ENCODE measurements at regions of chrX and their contacts with region 1.

Region 1: GRCh38 chrX:129637217-129638109 is 17.3 kb downstream of the APLN start:
- DNase-seq: peak; percentile 60 to 72
- ATAC-seq: peak; percentile 71 to 91
- H3K4me3 ChIP-seq: no peak overlapping the region
- H3K27ac ChIP-seq: no peak overlapping the region
- H3K4me1 ChIP-seq: no peaks in the 10 kb centered on the region
- CTCF ChIP-seq: peak; percentile 74
- EP300 ChIP-seq: no peak
- POLR2A ChIP-seq: no peak
- RAD21 ChIP-seq: peak; percentile 76 to 83

Region 2: GRCh38 chrX:129449148-129449547 is 188.3 kb before region 1 on chrX:
- CTCF ChIA-PET with region 1: no interaction called
- POLR2A ChIA-PET with region 1: no interaction called
- DNase-seq: peak in 1 of 2 experiments; percentile 13
- ATAC-seq: peak in 1 of 2 experiments; percentile 46; a peak in 1 of 6 replicates
- H3K4me3 ChIP-seq: no peak overlapping the region
- H3K27ac ChIP-seq: no peak overlapping the region
- H3K4me1 ChIP-seq: no peaks in the 10 kb centered on the region
- CTCF ChIP-seq: no peak
- EP300 ChIP-seq: no peak
- POLR2A ChIP-seq: no peak
- RAD21 ChIP-seq: no peak

Region 3: DNA sequence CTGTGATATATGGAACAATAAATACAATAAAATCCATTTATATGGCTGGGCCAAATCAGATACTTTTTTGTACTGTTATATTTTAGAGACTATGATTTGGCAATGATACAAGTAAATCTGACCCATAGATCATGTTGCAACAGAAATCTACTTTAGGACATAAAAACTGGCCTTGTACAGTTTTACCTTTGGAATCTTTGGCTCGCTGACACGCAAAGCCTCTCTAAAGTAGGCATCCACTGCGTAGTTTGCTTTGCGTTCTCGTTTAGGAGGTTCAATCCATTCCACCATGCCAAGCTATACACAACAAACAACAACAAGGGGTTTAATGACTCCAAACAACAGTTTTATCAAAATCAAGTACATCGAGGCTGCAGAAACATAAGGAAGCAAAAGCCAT is 156.6 kb before region 1 on chrX:
- CTCF ChIA-PET with region 1: no interaction called
- POLR2A ChIA-PET with region 1: no interaction called
- DNase-seq: no peak
- ATAC-seq: no peak
- H3K4me3 ChIP-seq: no peak overlapping the region
- H3K27ac ChIP-seq: no peak overlapping the region
- H3K4me1 ChIP-seq: no peaks in the 10 kb centered on the region
- CTCF ChIP-seq: no peak
- EP300 ChIP-seq: no peak
- POLR2A ChIP-seq: no peak
- RAD21 ChIP-seq: no peak

Region 4: GRCh38 chrX:129606918-129607317 is 30.5 kb before region 1 on chrX:
- CTCF ChIA-PET with region 1: interaction called, 21 read pairs
- POLR2A ChIA-PET with region 1: no interaction called
- DNase-seq: peak; percentile 47 to 62
- ATAC-seq: peak; percentile 59 to 69; a peak in 4 of 6 replicates
- H3K4me3 ChIP-seq: no peak overlapping the region
- H3K27ac ChIP-seq: no peak overlapping the region
- H3K4me1 ChIP-seq: peaks cover 4% of the 10 kb centered on the region; the same call in 1 of the 3 replicates
- CTCF ChIP-seq: peak; percentile 72
- EP300 ChIP-seq: no peak
- POLR2A ChIP-seq: no peak
- RAD21 ChIP-seq: peak; percentile 83 to 87

Region 5: GRCh38 chrX:129649268-129650182 is 12.1 kb after region 1 on chrX:
- CTCF ChIA-PET with region 1: interaction called, 18 read pairs
- POLR2A ChIA-PET with region 1: no interaction called
- DNase-seq: no peak
- ATAC-seq: no peak
- H3K4me3 ChIP-seq: no peak overlapping the region
- H3K27ac ChIP-seq: no peak overlapping the region
- H3K4me1 ChIP-seq: no peaks in the 10 kb centered on the region
- CTCF ChIP-seq: no peak
- EP300 ChIP-seq: no peak
- POLR2A ChIP-seq: no peak
- RAD21 ChIP-seq: no peak

Region 6: DNA sequence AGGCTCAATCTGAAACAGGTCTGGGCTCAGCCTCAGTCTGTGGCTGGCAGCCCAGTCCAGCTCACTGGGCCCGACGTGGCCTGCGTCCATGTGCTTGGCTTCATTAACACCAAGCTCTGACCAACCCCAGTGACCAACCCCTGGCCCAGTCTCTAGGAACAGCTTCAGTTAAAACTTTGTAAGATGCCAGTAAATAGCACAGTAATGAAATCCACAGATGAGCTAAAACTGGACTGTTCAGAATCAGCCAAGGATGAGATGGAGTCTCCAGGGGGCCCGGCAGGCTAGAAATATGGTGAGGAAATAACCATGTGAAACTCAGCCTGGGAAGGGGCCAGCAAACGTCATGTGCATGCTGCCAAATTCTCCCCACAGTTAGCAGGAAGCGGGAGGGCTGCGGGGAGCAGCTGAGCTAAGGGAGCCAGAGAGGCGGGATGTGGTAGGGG is 64.2 kb after region 1 on chrX:
- CTCF ChIA-PET with region 1: interaction called, 11 read pairs
- POLR2A ChIA-PET with region 1: no interaction called
- DNase-seq: no peak
- ATAC-seq: no peak
- H3K4me3 ChIP-seq: no peak overlapping the region
- H3K27ac ChIP-seq: no peak overlapping the region
- H3K4me1 ChIP-seq: peaks cover 18% of the 10 kb centered on the region
- CTCF ChIP-seq: no peak
- EP300 ChIP-seq: no peak
- POLR2A ChIP-seq: no peak
- RAD21 ChIP-seq: no peak

Region 7: GRCh38 chrX:129726307-129727111 is 89.0 kb after region 1 on chrX:
- CTCF ChIA-PET with region 1: interaction called, 218 read pairs
- POLR2A ChIA-PET with region 1: no interaction called
- DNase-seq: peak; percentile 36 to 63
- ATAC-seq: peak; percentile 87 to 97
- H3K4me3 ChIP-seq: no peak overlapping the region
- H3K27ac ChIP-seq: no peak overlapping the region
- H3K4me1 ChIP-seq: no peaks in the 10 kb centered on the region
- CTCF ChIP-seq: peak; percentile 76
- EP300 ChIP-seq: no peak
- POLR2A ChIP-seq: no peak
- RAD21 ChIP-seq: peak; percentile 89 to 94

Region 8: GRCh38 chrX:129746557-129747470 is 109.4 kb after region 1 on chrX:
- CTCF ChIA-PET with region 1: interaction called, 11 read pairs
- POLR2A ChIA-PET with region 1: no interaction called
- DNase-seq: no peak
- ATAC-seq: no peak
- H3K4me3 ChIP-seq: no peak overlapping the region
- H3K27ac ChIP-seq: no peak overlapping the region
- H3K4me1 ChIP-seq: no peaks in the 10 kb centered on the region
- CTCF ChIP-seq: no peak
- EP300 ChIP-seq: no peak
- POLR2A ChIP-seq: no peak
- RAD21 ChIP-seq: no peak